Panc1 (cell line): ENCODE measurements at regions of chr20 and their contacts with region 1.

Region 1: GRCh38 chr20:50610221-50610620 is 81.1 kb downstream of the RIPOR3 start:
- DNase-seq: no peak
- ATAC-seq: no peak
- H3K4me3 ChIP-seq: no peak overlapping the region
- H3K27ac ChIP-seq: no peak overlapping the region
- H3K4me1 ChIP-seq: peaks cover 11% of the 10 kb centered on the region; the same call in 1 of the 2 replicates
- H3K27me3 ChIP-seq: no peaks in the 10 kb centered on the region
- CTCF ChIP-seq: no peak

Region 2: GRCh38 chr20:50594591-50595432 is 15.4 kb before region 1 on chr20:
- CTCF ChIA-PET with region 1: no interaction called
- POLR2A ChIA-PET with region 1: no interaction called
- in situ Hi-C with region 1: no loop called
- intact Hi-C with region 1: no loop called
- DNase-seq: no peak
- ATAC-seq: peak; percentile 30
- H3K4me3 ChIP-seq: no peak overlapping the region
- H3K27ac ChIP-seq: peak overlapping the region; percentile 71
- H3K4me1 ChIP-seq: peaks cover 67% of the 10 kb centered on the region
- H3K27me3 ChIP-seq: no peaks in the 10 kb centered on the region
- CTCF ChIP-seq: no peak

Region 3: GRCh38 chr20:50655311-50655880 is 45.2 kb after region 1 on chr20:
- CTCF ChIA-PET with region 1: interaction called, 11 read pairs
- POLR2A ChIA-PET with region 1: no interaction called
- in situ Hi-C with region 1: no loop called
- intact Hi-C with region 1: no loop called
- DNase-seq: no peak
- ATAC-seq: peak; percentile 51
- H3K4me3 ChIP-seq: peak overlapping the region in 1 of 2 experiments; percentile 28; a peak in 2 of 4 replicates
- H3K27ac ChIP-seq: peak overlapping the region; percentile 92
- H3K4me1 ChIP-seq: peaks cover 57% of the 10 kb centered on the region
- H3K27me3 ChIP-seq: no peaks in the 10 kb centered on the region
- CTCF ChIP-seq: no peak